GM12878 (cell line): ENCODE measurements at regions of chr4 and their contacts with region 1.

Region 1: DNA sequence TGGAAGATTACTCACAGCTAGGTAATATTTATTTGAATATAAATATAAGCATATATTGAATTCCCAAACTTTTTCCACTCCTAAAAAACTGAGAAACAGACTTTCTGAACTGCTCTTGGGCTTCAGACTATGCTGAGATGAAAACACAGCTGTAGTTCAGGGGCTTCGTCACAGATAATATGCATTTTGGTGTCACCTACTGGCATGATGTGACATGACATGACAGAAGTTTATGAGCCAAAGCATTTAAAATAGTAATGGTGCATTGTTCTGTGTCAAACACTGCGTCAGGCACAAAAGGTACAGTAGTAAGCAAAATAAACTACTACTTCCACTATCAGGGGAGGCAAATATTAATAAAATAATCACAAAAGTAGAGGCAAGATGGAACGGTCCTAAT is 171.3 kb downstream of the BTC start:
- DNase-seq: no peak
- ATAC-seq: peak; percentile 77
- H3K4me3 ChIP-seq: no peak overlapping the region
- H3K27ac ChIP-seq: no peak overlapping the region
- H3K4me1 ChIP-seq: no peaks in the 10 kb centered on the region
- H3K27me3 ChIP-seq: no peaks in the 10 kb centered on the region
- CTCF ChIP-seq: peak; percentile 45 to 71 (median 56); a peak in 5 of 6 replicates
- EP300 ChIP-seq: no peak
- POLR2A ChIP-seq: no peak
- RAD21 ChIP-seq: peak; percentile 63

Region 2: GRCh38 chr4:74320559-74321118 is 302.4 kb before region 1 on chr4:
- CTCF ChIA-PET with region 1: interaction called, 35 read pairs
- POLR2A ChIA-PET with region 1: no interaction called
- RAD21 ChIA-PET with region 1: interaction called, 22 read pairs
- SMC1A ChIA-PET with region 1: interaction called, 5 read pairs
- in situ Hi-C with region 1: no loop called
- intact Hi-C with region 1: loop called (anchors 2 kb)
- DNase-seq: peak; percentile 9
- ATAC-seq: peak; percentile 90
- H3K4me3 ChIP-seq: no peak overlapping the region
- H3K27ac ChIP-seq: no peak overlapping the region
- H3K4me1 ChIP-seq: no peaks in the 10 kb centered on the region
- H3K27me3 ChIP-seq: 0 out of 4 replicates have a peak, but pooled peaks cover 0 to 3% of the 10 kb centered on the region in 2 experiments
- CTCF ChIP-seq: peak; percentile 39 to 58 (median 50); a peak in 5 of 6 replicates
- EP300 ChIP-seq: no peak
- POLR2A ChIP-seq: no peak
- RAD21 ChIP-seq: peak; percentile 89

Region 3: DNA sequence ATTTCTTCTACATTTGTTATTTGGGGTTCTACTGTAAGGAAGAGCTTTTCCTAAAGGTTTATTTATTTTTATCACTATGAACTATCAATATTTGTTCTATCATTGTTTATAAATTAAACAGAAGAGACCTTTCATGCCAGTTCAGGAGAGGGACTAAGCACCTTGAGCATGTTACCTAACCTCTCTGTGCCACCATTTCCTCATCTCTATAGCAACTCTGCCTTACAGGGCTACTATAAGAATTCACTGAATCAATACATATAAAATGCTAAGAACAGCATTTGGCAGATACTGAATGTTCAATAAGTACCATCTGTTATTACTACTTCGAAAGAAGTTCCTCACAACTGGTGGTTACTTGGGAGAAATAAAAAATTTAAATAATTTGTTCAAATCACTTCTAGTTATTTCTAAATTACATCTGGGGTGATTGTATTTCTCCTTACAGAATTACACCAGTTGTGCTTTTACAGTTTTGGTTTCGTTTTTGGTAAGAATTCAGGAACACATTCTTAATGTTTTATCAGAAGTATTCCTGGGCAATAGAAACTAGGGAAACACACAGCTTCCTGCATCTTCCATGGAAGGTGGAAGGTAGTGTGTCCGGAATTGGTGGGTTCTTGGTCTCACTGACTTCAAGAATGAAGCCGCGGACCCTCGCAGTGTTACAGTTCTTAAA is 225.2 kb before region 1 on chr4:
- CTCF ChIA-PET with region 1: no interaction called
- POLR2A ChIA-PET with region 1: no interaction called
- RAD21 ChIA-PET with region 1: no interaction called
- SMC1A ChIA-PET with region 1: no interaction called
- in situ Hi-C with region 1: no loop called
- intact Hi-C with region 1: no loop called
- DNase-seq: no peak
- ATAC-seq: peak; percentile 67
- H3K4me3 ChIP-seq: peak overlapping the region; percentile 79; the same call in 1 of the 2 replicates
- H3K27ac ChIP-seq: no peak overlapping the region
- H3K4me1 ChIP-seq: peaks cover 3% of the 10 kb centered on the region
- H3K27me3 ChIP-seq: no peaks in the 10 kb centered on the region; a peak in 1 of 4 replicates
- CTCF ChIP-seq: no peak
- EP300 ChIP-seq: no peak
- POLR2A ChIP-seq: no peak
- RAD21 ChIP-seq: no peak

Region 4: GRCh38 chr4:75821216-75821615 is 1198.2 kb after region 1 on chr4:
- CTCF ChIA-PET with region 1: no interaction called
- POLR2A ChIA-PET with region 1: no interaction called
- RAD21 ChIA-PET with region 1: no interaction called
- SMC1A ChIA-PET with region 1: no interaction called
- in situ Hi-C with region 1: no loop called
- intact Hi-C with region 1: no loop called
- DNase-seq: no peak
- ATAC-seq: no peak
- H3K4me3 ChIP-seq: no peak overlapping the region
- H3K27ac ChIP-seq: no peak overlapping the region
- H3K4me1 ChIP-seq: no peaks in the 10 kb centered on the region
- H3K27me3 ChIP-seq: no peaks in the 10 kb centered on the region
- CTCF ChIP-seq: no peak
- EP300 ChIP-seq: no peak
- POLR2A ChIP-seq: no peak
- RAD21 ChIP-seq: no peak